ENCODE measurements at regions of chr2 and their contacts with region 1.

Region 1: DNA sequence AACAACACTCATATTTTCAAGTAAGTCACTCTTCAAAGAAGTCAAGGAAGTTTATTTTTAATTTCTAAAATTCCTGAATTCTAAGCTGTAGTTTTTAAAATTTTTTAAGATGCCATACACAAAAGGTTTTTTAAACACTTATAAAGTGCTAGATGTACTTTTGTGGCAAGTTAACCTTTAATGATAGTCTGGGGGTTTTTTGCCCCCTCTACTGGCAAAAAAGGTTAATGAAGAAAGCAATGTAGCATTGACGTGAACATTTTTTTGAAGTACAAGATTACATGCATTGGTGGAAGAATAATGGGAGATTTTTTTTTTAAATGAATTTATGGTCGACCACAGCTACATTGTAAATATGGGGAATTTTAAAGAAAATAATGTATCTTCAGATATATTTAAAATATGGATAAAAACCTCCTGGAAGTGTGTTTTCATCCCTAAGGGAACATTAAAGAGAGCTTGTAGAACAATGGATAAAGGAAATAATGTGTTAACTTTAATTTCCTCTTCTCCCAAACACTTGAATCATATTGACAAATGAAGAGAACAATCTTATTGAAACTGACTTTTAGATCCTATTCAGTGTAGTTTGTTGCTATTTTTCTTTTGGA is 12.6 kb downstream of the ITPRID2 start:
- DNase-seq: no peak
- ATAC-seq: no peak
- H3K4me3 ChIP-seq: no peak overlapping the region
- H3K27ac ChIP-seq: peak overlapping the region; percentile 51
- H3K4me1 ChIP-seq: peaks cover 34% of the 10 kb centered on the region
- H3K27me3 ChIP-seq: no peaks in the 10 kb centered on the region
- CTCF ChIP-seq: peak; percentile 68; the same call in 1 of the 2 replicates

Region 2: DNA sequence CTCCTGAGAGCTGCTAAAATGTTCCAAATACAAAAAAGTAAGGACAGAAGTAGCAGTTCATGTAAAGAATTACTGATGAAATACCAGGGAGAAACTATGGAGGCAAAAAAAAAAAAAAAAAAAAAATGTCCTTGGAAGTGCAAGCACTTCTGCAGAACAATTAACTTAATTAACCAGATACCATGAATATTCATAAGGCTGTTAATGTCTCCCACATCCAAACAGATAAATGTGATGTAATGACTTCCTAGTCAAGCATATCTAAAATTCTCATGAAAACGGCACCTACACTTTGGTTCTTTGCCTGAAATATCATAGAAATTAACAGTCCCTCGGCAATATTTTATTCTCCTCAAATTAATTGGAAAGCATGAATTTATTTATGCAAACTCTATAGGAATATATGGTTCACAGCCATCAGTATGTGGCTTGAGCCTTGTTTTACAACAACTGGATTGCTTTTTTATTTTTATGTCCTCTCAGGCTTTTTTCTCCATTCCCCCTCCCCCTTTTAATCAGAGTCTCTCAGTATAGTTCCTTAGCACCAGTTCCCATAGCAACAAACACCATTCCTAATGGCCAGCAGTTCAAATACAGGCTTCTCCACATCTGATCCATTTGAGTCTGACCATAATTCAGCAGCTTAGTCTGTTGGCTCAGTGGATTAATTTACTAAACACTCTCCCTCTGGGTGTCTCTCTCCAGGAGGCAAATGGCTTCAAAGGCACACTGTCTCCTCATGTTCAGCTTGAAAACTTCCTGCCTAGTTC is 349.9 kb before region 1 on chr2:
- CTCF ChIA-PET with region 1: no interaction called
- POLR2A ChIA-PET with region 1: interaction called, 21 read pairs
- in situ Hi-C with region 1: no loop called
- intact Hi-C with region 1: no loop called
- DNase-seq: no peak
- ATAC-seq: no peak
- H3K4me3 ChIP-seq: no peak overlapping the region
- H3K27ac ChIP-seq: no peak overlapping the region
- H3K4me1 ChIP-seq: no peaks in the 10 kb centered on the region
- H3K27me3 ChIP-seq: no peaks in the 10 kb centered on the region
- CTCF ChIP-seq: no peak

Region 3: DNA sequence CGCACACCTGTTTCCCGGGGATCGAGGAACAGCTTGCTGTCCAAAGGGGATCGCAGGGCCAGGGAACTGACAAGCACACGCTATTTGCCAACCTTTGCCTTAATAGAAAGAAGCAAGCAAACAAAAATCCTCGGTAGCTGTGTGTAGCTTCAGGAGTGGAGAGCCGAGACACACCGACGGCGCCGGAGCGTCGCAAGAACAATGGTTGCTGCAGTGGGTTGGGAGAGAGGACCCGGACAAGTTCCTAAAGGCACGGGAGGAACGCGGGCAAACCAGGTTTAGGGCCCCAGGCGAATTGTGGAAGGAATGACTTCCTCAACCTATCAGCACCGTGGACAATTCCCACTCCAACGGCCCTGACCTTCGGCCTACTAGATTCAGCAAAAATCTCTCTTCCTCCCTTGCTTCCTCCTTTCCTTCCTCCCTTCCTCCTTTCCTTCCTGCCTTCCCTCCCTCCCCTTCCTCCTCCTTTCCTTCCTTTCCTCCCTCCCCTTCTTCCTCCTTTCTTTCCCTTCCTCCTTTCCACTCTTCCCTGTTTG is 218.9 kb before region 1 on chr2:
- CTCF ChIA-PET with region 1: no interaction called
- POLR2A ChIA-PET with region 1: interaction called, 23 read pairs
- in situ Hi-C with region 1: no loop called
- intact Hi-C with region 1: no loop called
- DNase-seq: no peak
- ATAC-seq: no peak
- H3K4me3 ChIP-seq: no peak overlapping the region
- H3K27ac ChIP-seq: no peak overlapping the region
- H3K4me1 ChIP-seq: no peaks in the 10 kb centered on the region
- H3K27me3 ChIP-seq: peaks cover 8% of the 10 kb centered on the region
- CTCF ChIP-seq: no peak